ENCODE measurements at regions of chr3 and their contacts with region 1.

Region 1: GRCh38 chr3:128969993-128970739 is 23.7 kb downstream of the CFAP92 start:
- DNase-seq: peak; percentile 61 to 81 (median 79)
- H3K4me3 ChIP-seq: no peak overlapping the region
- H3K27ac ChIP-seq: no peak overlapping the region
- H3K4me1 ChIP-seq: peaks cover 6 to 26% (median 21%) of the 10 kb centered on the region in 4 experiments
- H3K27me3 ChIP-seq: no peaks in the 10 kb centered on the region

Region 2: GRCh38 chr3:129003578-129004160 is 33.5 kb after region 1 on chr3:
- CTCF ChIA-PET with region 1: interaction called, 20 read pairs
- POLR2A ChIA-PET with region 1: no interaction called
- DNase-seq: peak in 2 of 3 donors; percentile 65 to 81
- H3K4me3 ChIP-seq: peak overlapping the region in 5 of 7 experiments; percentile 16 to 88 (median 54)
- H3K27ac ChIP-seq: no peak overlapping the region
- H3K4me1 ChIP-seq: peaks cover 5 to 70% (median 62%) of the 10 kb centered on the region in 4 experiments
- H3K27me3 ChIP-seq: no peaks in the 10 kb centered on the region

Region 3: DNA sequence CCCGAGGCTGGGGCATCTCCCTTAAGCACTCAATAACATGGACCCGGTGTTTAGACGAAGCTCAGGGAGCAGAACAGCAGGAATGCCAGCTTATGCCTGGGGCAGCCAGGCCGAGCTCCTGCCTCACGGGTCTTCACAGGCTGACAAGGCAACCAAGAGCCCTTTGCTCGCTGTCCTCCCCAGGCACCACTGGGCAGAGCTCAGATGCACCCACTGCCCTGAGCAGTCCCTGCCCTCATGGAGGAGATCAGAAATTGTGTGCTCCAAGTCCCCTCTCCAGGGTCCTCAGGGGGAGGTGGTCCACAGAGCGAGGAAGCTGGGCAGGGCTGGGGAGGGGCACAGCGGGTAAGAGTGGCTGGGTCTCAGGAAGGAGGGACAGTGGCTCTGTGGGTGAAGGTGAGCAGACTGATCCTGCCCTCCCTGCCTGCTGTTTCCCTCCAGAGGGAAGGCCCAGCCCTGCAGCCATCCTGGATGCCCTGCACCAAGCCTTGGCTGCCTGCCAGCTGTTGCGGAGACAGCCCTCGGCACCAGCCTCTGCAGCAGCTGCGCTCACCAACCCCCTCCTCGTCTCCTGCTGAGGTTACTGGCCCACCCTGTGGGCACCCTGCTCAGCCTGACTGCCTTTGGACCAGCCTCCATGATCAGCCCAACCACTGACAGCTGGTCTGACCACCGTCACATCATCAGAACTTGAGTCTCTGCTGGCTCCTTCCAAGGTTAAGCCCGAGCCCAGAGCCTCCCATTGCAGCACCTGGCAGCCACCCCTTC is 69.3 kb after region 1 on chr3:
- CTCF ChIA-PET with region 1: interaction called, 15 read pairs
- POLR2A ChIA-PET with region 1: no interaction called
- DNase-seq: peak in 2 of 3 donors; percentile 63 to 64
- H3K4me3 ChIP-seq: no peak overlapping the region
- H3K27ac ChIP-seq: no peak overlapping the region
- H3K4me1 ChIP-seq: peaks cover 0 to 37% (median 27%) of the 10 kb centered on the region in 4 experiments
- H3K27me3 ChIP-seq: no peaks in the 10 kb centered on the region

Region 4: GRCh38 chr3:129068291-129068886 is 98.2 kb after region 1 on chr3:
- CTCF ChIA-PET with region 1: interaction called, 11 read pairs
- POLR2A ChIA-PET with region 1: no interaction called
- DNase-seq: peak in 2 of 3 donors; percentile 46 to 66
- H3K4me3 ChIP-seq: peak overlapping the region in 5 of 7 experiments; percentile 8 to 71 (median 58)
- H3K27ac ChIP-seq: no peak overlapping the region
- H3K4me1 ChIP-seq: peaks cover 8 to 31% (median 20%) of the 10 kb centered on the region in 4 experiments
- H3K27me3 ChIP-seq: no peaks in the 10 kb centered on the region

Region 5: GRCh38 chr3:129160891-129161859 is 191.0 kb after region 1 on chr3 and contains the start of gene ISY1:
- CTCF ChIA-PET with region 1: interaction called, 24 read pairs
- POLR2A ChIA-PET with region 1: no interaction called
- DNase-seq: peak; percentile 93 to 96 (median 95)
- H3K4me3 ChIP-seq: peak within 1 kb of the TSS; percentile 84 to 99 (median 92)
- H3K27ac ChIP-seq: peak within 1 kb of the TSS; percentile 94 to 97
- H3K4me1 ChIP-seq: peaks cover 9 to 30% (median 22%) of the 10 kb centered on the region in 4 experiments
- H3K27me3 ChIP-seq: no peaks in the 10 kb centered on the region